Astrocyte of the cerebellum (primary cell): ENCODE measurements at regions of chr11 and their contacts with region 1.

Region 1: GRCh38 chr11:63663809-63664208 is 7.4 kb downstream of the ATL3 start:
- DNase-seq: no peak
- H3K4me3 ChIP-seq: no peak overlapping the region
- CTCF ChIP-seq: no peak

Region 2: GRCh38 chr11:63694596-63694995 is 30.8 kb after region 1 on chr11:
- in situ Hi-C with region 1: no loop called
- DNase-seq: no peak
- H3K4me3 ChIP-seq: no peak overlapping the region
- CTCF ChIP-seq: no peak

Region 3: GRCh38 chr11:63719977-63720376 is 56.2 kb after region 1 on chr11:
- in situ Hi-C with region 1: loop called (anchors 5 kb)
- DNase-seq: peak; percentile 23
- H3K4me3 ChIP-seq: no peak overlapping the region
- CTCF ChIP-seq: no peak